ENCODE measurements at regions of chr14 and their contacts with region 1.

Region 1: DNA sequence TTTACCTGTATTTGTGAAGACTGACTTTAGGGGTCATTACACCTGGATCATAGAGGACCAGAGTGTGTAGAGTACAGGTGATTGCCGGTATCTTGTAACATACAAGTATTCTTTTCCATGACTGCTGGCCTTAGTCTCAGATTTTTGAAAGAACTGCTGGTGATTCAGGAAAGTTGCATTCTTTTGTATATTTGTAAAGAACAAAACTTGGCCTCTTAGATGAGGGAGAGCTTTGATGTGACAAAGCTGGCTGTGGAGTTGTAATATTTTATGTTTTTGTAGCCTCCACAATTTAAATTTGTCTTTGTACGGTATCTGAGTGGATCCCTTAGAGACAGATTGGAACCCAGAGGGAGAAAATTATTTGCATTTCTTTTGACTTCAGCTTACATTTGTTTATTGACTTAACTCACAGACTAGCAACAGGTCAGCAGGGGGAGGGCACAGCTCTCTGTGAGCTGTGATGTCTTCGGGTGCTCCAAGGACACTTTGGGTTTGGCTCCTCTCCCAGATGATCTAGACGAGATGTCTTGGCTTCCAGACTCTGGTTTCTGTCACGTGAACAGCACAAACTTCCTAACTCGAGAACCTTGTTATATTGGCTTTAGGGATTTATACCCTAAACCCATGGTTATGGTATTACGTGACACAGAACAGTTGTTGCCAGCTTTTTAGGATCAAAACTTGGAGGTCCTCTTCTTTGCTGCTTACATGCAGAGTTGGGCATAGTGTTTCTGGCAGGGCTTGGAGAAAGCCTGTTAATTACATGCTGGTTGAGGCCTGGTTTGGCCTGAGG is 65.9 kb downstream of the DAAM1 start:
- DNase-seq: peak; percentile 70 to 87 (median 86)
- ATAC-seq: peak; percentile 81 to 92 (median 90)
- H3K4me3 ChIP-seq: no peak overlapping the region
- H3K27ac ChIP-seq: peak overlapping the region; percentile 72 to 93 (median 86)
- H3K4me1 ChIP-seq: peaks cover 19 to 78% (median 63%) of the 10 kb centered on the region in 12 donors
- H3K27me3 ChIP-seq: no peaks in the 10 kb centered on the region
- CTCF ChIP-seq: peak in 3 of 12 donors; percentile 11 to 40 (median 20)
- POLR2A ChIP-seq: no peak

Region 2: GRCh38 chr14:59132796-59133494 is 121.4 kb before region 1 on chr14:
- intact Hi-C with region 1: loop called in 1 of 10 experiments (anchors 10 kb)
- DNase-seq: no peak
- ATAC-seq: peak in 1 of 4 donors; percentile 61
- H3K4me3 ChIP-seq: no peak overlapping the region
- H3K27ac ChIP-seq: no peak overlapping the region
- H3K4me1 ChIP-seq: peaks cover 0 to 11% (median 0%) of the 10 kb centered on the region in 12 donors
- H3K27me3 ChIP-seq: no peaks in the 10 kb centered on the region
- CTCF ChIP-seq: peak in 5 of 12 donors; percentile 13 to 40 (median 18)
- POLR2A ChIP-seq: no peak

Region 3: DNA sequence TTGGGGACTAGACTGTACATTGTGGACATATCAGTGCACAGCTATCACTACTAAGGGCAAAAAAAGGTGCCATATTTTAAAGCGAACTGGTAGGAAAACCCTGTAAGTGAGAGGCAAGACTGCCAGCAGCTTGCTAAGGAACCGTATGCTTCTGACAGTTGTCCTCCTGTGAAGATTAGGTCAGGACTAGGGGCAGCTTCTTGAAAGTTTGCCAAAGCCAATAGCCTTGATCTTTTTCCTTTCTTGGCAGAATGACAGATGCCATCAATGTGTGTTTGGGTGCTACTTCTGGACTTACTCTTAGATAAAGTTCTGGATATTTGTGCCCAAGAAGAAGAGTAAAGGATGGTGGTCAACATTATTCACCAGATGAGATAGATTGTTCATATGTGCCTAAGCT is 58.4 kb before region 1 on chr14:
- intact Hi-C with region 1: loop called in 7 of 10 experiments (anchors 2 to 10 kb)
- DNase-seq: no peak
- ATAC-seq: no peak
- H3K4me3 ChIP-seq: no peak overlapping the region
- H3K27ac ChIP-seq: peak overlapping the region in 6 of 12 donors; percentile 1 to 69 (median 16)
- H3K4me1 ChIP-seq: peaks cover 0 to 89% (median 63%) of the 10 kb centered on the region in 12 donors
- H3K27me3 ChIP-seq: no peaks in the 10 kb centered on the region
- CTCF ChIP-seq: no peak
- POLR2A ChIP-seq: no peak

Region 4: GRCh38 chr14:59320763-59321640 is 66.7 kb after region 1 on chr14:
- intact Hi-C with region 1: loop called in 1 of 10 experiments (anchors 5 kb)
- DNase-seq: no peak
- ATAC-seq: peak; percentile 27 to 84 (median 76)
- H3K4me3 ChIP-seq: peak overlapping the region in 1 of 12 donors; percentile 12
- H3K27ac ChIP-seq: peak overlapping the region; percentile 68 to 90 (median 79)
- H3K4me1 ChIP-seq: peaks cover 6 to 72% (median 58%) of the 10 kb centered on the region in 12 donors
- H3K27me3 ChIP-seq: no peaks in the 10 kb centered on the region
- CTCF ChIP-seq: no peak
- POLR2A ChIP-seq: no peak

Region 5: GRCh38 chr14:59560314-59560713 is 306.0 kb after region 1 on chr14:
- intact Hi-C with region 1: no loop called
- DNase-seq: no peak
- ATAC-seq: no peak
- H3K4me3 ChIP-seq: no peak overlapping the region
- H3K27ac ChIP-seq: no peak overlapping the region
- H3K4me1 ChIP-seq: no peaks in the 10 kb centered on the region
- H3K27me3 ChIP-seq: no peaks in the 10 kb centered on the region
- CTCF ChIP-seq: no peak
- POLR2A ChIP-seq: no peak